ENCODE measurements at regions of chr7 and their contacts with region 1.

Region 1: DNA sequence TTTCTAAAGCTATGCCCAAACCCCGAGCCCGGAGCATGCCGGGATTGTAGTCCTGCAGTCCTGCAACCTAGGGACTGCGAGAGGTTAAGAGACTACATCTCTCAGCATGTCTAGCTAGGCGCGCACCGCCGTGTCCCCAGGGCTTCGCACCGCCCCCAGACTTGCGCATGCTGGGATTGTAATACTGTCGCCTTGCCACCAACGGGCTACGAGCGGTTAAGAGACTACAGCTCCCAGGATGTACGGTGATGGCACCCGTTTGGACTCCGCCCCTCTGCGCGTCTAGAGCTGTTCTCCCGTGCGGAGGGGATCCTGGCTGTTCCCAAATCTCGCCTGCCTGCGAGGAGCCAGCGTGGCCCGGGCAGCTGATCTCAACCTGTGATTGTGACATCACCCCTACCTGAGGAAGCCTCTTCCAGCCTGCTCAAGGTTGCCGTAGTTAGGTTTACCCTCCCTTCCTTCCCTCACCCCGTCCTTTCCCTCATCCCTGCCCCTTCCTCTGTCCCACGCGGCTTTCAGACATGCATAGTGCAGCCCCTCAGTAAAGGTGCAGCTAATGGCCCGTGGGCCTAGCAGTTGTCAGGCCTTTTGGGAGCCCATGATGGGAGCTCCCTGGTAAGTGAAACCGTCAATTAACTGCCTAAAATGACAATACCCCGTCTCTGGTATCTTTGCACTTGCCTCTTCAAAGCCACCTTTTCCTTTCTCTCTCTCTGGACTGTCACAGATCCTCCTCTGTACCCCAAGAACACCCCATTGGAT is 6.3 kb upstream of the ZNF736 start:
- DNase-seq: peak; percentile 91 to 92
- ATAC-seq: peak; percentile 96 to 100 (median 98)
- H3K4me3 ChIP-seq: peak overlapping the region; percentile 27 to 68 (median 62)
- H3K27ac ChIP-seq: peak overlapping the region; percentile 54 to 91 (median 81)
- H3K4me1 ChIP-seq: peaks cover 0 to 15% (median 6%) of the 10 kb centered on the region in 9 donors
- H3K27me3 ChIP-seq: no peaks in the 10 kb centered on the region
- CTCF ChIP-seq: peak in 1 of 9 donors; percentile 24

Region 2: DNA sequence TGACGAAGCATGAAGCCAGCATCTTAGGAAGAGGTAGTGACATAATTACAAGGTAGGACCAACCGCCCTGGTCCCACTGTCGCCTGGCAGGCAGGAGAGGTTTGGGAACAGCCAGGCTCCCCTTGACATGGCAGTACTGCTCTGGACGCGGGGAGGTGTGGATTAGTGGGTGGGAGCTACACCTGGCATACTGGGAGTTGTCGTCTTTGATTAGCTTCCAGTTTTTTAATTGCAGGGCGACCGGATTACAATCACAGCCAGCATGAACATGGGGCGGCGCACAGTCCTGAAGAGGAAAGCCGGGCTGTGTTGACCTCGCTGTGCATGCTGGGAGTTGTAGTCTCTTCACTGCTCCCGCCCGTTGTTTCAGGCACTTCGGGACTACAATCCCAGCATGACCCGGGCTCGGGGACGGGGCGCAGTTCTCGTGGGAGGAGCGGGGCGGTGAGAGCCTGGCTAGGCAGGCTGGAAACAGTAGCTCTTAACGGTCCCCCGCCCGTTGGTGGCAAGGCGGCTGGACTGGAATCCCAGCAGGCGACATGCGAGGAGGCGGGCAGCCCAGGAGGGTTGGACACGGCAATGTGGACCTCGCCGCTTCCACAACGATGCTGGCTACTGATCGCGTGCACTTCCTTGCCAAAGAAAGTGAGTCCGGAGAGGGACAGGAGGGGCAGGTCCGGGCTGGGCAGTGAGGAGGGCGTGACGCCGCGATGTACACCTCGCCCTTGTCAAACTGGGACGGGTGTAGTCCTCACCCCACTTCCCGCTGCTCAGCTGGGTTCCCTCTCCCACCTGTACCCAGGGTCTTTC is 406.8 kb before region 1 on chr7:
- intact Hi-C with region 1: loop called in 1 of 10 experiments (anchors 10 kb)
- DNase-seq: peak; percentile 88 to 98
- ATAC-seq: peak; percentile 99 to 100 (median 99)
- H3K4me3 ChIP-seq: peak overlapping the region; percentile 51 to 86 (median 70)
- H3K27ac ChIP-seq: peak overlapping the region in 8 of 10 donors; percentile 1 to 62 (median 34)
- H3K4me1 ChIP-seq: peaks cover 0 to 12% (median 0%) of the 10 kb centered on the region in 9 donors
- H3K27me3 ChIP-seq: no peaks in the 10 kb centered on the region
- CTCF ChIP-seq: peak in 2 of 9 donors; percentile 3 to 18

Region 3: GRCh38 chr7:64223366-64223765 is 84.1 kb before region 1 on chr7:
- intact Hi-C with region 1: no loop called
- DNase-seq: no peak
- ATAC-seq: no peak
- H3K4me3 ChIP-seq: no peak overlapping the region
- H3K27ac ChIP-seq: no peak overlapping the region
- H3K4me1 ChIP-seq: no peaks in the 10 kb centered on the region
- H3K27me3 ChIP-seq: no peaks in the 10 kb centered on the region
- CTCF ChIP-seq: no peak

Region 4: GRCh38 chr7:64665980-64666662 is 358.7 kb after region 1 on chr7 and contains the start of gene ZNF107:
- intact Hi-C with region 1: loop called in 1 of 10 experiments (anchors 5 kb)
- DNase-seq: peak; percentile 91 to 95
- ATAC-seq: peak; percentile 99 to 100 (median 100)
- H3K4me3 ChIP-seq: peak within 1 kb of the TSS; percentile 65 to 91 (median 82)
- H3K27ac ChIP-seq: peak within 1 kb of the TSS in 9 of 10 donors; percentile 69 to 84 (median 73)
- H3K4me1 ChIP-seq: peaks cover 0 to 25% (median 11%) of the 10 kb centered on the region in 9 donors
- H3K27me3 ChIP-seq: no peaks in the 10 kb centered on the region
- CTCF ChIP-seq: no peak
- total RNA-seq, gene ZNF107: 1.3 to 2.8 (median 1.9) TPM